ENCODE measurements at regions of chr12 and their contacts with region 1.

Region 1: DNA sequence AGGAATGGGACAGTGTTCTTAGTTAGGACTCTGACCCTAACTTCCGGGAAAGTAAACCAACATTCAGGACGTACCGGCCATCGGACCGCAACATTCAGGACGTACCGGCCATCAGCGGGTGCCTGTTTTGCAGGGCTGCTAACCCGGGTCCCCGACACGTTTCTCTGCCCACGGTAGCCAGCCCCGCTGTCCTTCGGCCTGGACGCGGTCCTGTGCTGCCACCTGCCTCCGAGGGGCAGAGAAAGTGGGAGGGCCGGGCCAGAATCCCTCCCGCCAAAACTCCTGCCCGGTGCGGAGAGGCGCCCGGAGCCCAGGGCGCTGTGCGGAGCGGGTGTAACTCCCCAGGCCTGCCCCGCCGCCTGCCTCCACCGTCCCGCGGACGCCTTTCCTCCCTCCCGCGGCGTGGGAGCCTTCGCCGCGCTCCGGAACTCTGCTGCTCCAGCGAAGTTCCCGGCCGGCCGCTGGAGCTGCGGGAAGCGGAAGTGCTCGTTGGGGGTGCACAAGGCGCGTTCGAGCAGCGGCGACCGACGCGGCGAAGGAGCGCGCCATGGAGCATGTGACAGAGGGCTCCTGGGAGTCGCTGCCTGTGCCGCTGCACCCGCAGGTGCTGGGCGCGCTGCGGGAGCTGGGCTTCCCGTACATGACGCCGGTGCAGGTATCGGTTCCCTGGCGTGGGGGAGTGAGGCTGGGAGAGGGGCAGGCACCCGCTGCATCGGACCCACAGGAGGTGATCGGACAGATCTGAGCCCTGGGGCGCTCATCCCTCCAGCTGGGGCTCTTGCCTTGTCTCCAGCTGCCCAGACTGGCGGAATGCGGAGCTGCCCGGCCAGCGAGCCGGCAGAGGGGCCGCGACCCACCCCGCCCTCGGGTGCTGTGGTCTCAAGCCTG is at the start of gene DDX55:
- DNase-seq: peak in 1 of 2 donors; percentile 88
- H3K4me3 ChIP-seq: peak within 1 kb of the TSS; percentile 75 to 89
- H3K27ac ChIP-seq: peak within 1 kb of the TSS; percentile 70 to 87
- H3K4me1 ChIP-seq: peaks cover 0 to 8% of the 10 kb centered on the region in 2 donors
- H3K27me3 ChIP-seq: no peaks in the 10 kb centered on the region
- CTCF ChIP-seq: peak; percentile 52 to 77 (median 68)
- total RNA-seq, gene DDX55: 26.6 TPM

Region 2: GRCh38 chr12:123271001-123271729 is 330.7 kb before region 1 on chr12:
- intact Hi-C with region 1: loop called (anchors 2 kb)
- DNase-seq: peak in 1 of 2 donors; percentile 82
- H3K4me3 ChIP-seq: peak overlapping the region; percentile 79 to 98
- H3K27ac ChIP-seq: peak overlapping the region; percentile 80 to 83
- H3K4me1 ChIP-seq: peaks cover 3 to 23% of the 10 kb centered on the region in 2 donors
- H3K27me3 ChIP-seq: no peaks in the 10 kb centered on the region
- CTCF ChIP-seq: peak in 2 of 3 experiments; percentile 9 to 73

Region 3: DNA sequence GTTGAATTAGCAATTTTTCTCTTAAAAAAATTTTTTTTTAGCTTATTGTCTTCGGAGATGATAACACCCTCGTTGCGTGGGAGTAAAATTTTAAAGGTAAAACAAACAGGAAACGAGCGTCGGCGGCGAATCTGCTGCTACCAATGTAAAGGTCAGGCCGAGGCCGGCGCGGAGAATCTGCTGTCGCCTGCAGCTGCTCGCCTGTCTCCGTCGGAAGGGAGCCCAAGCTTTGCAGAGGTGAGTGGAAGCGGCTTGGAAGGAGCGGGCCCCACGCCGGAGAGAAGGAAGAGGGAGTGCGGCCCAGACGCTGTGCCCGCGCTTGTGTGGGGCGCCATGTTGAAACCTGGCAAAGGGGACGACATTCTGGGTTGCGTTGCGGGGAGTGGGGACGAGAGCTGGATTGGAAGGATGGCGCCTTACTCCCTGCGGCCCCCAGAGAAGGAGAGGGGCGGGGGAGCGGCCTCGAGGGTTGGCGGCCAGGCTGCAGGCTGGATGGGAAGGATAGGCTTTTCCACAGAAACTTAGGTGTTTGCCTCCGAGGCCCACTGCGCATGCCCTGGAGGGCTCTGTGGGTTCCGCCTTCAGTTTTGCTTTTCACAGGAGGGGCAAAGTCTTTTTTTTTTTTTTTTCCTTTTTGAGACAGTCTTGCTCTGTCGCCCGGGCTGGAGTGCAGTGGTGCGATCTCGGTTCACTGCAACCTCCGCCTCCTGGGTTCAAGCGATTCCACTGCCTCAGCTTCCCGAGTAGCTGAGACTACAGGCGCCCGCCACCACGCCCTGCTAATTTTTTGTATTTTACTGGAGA is 143.7 kb before region 1 on chr12 and contains the start of gene SNRNP35:
- intact Hi-C with region 1: no loop called
- DNase-seq: peak; percentile 31 to 83
- H3K4me3 ChIP-seq: peak within 1 kb of the TSS; percentile 82 to 93
- H3K27ac ChIP-seq: peak within 1 kb of the TSS; percentile 97 to 99
- H3K4me1 ChIP-seq: peaks cover 0 to 12% of the 10 kb centered on the region in 2 donors
- H3K27me3 ChIP-seq: no peaks in the 10 kb centered on the region
- CTCF ChIP-seq: no peak
- total RNA-seq, gene SNRNP35: 5.9 TPM

Region 4: GRCh38 chr12:123546281-123546680 is 55.6 kb before region 1 on chr12:
- intact Hi-C with region 1: no loop called
- DNase-seq: no peak
- H3K4me3 ChIP-seq: no peak overlapping the region
- H3K27ac ChIP-seq: no peak overlapping the region
- H3K4me1 ChIP-seq: no peaks in the 10 kb centered on the region
- H3K27me3 ChIP-seq: no peaks in the 10 kb centered on the region
- CTCF ChIP-seq: no peak

Region 5: DNA sequence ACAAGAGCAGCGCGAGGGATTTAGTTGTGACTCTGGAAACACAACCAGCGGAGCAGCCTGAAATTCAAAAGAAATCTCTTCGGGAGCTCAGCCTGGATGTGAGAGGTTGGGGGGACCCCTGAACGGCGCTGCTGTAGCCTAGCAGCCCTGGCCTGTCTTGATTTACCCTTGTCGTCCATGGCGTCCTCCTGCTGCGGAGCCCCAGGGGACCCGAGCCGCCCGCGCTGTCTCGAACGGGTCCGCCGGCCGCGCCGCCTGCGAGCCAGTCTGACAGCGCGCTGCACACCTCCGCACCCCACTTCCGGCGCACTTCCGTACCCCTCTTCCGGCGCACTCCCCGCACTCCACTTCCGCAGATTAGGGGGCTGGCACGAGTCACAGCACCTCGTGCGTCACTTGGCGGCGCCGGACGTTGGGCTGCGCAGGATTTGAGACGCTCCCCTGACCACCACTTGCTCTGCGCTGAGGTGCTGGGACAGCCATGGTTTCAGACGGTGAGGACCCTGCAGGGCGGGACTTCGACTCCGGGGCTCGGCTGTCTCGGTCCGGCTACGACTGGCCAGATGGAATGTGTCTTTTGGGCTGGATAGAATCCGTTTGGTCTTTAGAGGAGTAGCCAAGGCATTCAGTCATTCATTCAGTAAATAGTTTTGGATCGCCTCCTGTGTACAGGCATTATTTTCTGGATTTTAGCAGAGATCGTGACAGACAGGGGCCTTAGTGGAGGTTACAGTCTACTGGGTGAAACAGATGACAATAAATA is 31.7 kb after region 1 on chr12 and contains the starts of genes EIF2B1 and GTF2H3:
- intact Hi-C with region 1: loop called (anchors 1 kb)
- DNase-seq: peak; percentile 85 to 98
- H3K4me3 ChIP-seq: peak within 1 kb of the TSS; percentile 60 to 80
- H3K27ac ChIP-seq: peak within 1 kb of the TSS; percentile 76 to 87
- H3K4me1 ChIP-seq: peaks cover 6 to 9% of the 10 kb centered on the region in 2 donors
- H3K27me3 ChIP-seq: no peaks in the 10 kb centered on the region
- CTCF ChIP-seq: no peak
- total RNA-seq, gene EIF2B1: 72.2 TPM
- total RNA-seq, gene GTF2H3: 12.0 TPM

Measured in ascending aorta (tissue), 2 donors.